Endothelial cell of umbilical vein (primary cell): ENCODE measurements at regions of chr19 and their contacts with region 1.

Region 1: GRCh38 chr19:33080761-33081681 is at the start of gene GPATCH1:
- DNase-seq: peak; percentile 87
- H3K4me3 ChIP-seq: peak within 1 kb of the TSS; percentile 79 to 89 (median 88)
- H3K27ac ChIP-seq: peak within 1 kb of the TSS; percentile 14
- H3K4me1 ChIP-seq: peaks cover 9% of the 10 kb centered on the region
- H3K27me3 ChIP-seq: no peaks in the 10 kb centered on the region
- CTCF ChIP-seq: no peak
- POLR2A ChIP-seq: peak; percentile 68
- total RNA-seq, gene GPATCH1: 8.1 and 9.2 TPM in 2 replicates

Region 2: DNA sequence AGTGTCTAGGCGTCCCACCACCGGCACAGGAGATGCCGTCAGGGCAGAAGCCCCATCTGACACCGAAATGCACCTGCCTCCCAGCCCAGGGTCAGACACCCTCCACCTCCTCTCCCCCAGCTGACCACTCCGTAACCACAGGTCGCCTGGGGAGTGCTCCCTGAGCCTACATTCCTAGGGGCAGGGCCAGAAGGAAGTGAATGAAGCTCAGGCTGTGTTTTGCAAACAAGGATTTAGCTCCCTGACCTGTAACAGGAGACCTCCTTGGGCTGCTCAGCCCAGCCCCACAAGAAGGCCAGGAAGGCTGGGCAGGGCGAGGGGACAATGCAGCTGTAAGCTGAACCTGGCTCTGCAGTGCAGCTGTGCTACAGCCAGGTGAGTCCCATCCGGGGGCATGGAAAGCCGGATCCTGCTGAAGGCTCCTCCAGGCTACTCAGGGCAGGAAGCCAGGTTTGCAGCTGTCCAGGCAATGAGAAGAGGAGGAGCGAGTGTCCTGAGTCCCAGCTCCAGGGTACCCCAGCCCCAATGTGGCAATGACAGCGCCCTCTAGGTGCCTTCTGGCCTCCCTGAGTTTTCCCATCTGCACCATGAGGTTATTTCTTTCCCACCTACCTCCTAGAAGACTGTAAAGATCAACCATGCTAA is 58.4 kb before region 1 on chr19:
- CTCF ChIA-PET with region 1: no interaction called
- POLR2A ChIA-PET with region 1: no interaction called
- dilution Hi-C with region 1: no loop called
- intact Hi-C with region 1: no loop called
- DNase-seq: no peak
- H3K4me3 ChIP-seq: no peak overlapping the region
- H3K27ac ChIP-seq: no peak overlapping the region
- H3K4me1 ChIP-seq: no peaks in the 10 kb centered on the region
- H3K27me3 ChIP-seq: no peaks in the 10 kb centered on the region
- CTCF ChIP-seq: no peak
- POLR2A ChIP-seq: no peak

Region 3: DNA sequence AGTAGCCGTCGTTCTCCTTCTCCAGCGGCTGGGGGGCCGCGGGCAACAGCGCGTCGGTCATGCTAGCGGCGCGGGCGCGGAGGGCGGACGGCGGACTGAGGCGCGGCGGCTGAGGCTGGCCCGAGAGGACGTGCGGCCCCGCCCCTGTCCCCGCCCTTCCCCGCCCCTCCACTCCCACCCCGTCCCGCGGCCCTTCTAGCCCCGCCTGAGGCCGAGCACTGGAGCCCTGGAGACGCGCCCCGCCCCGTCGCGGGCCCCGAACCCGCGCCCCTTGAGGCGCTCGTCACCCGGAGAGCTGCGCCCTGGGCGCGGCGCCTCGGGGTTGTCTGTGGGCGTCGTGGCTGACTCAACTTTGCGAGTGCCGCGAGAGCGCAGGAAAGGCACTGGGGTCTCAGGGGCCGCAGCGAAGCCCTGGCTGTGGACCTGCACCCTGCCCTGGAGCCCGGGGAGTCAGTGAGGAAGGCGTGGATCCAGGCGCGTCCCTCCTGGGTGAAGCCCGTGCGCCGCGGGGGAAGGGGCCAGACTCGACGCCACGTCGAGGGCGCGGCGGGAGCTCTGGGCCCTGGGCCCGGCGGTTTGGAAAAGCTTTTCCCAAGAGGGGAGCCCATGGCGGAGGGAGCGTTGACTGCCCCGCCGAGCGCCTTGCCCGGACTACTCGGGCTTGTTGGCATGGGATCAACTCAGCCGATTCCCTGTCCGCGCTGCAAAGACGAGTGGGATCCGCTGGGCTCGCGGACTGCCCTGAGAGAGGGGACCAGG is 16.1 kb before region 1 on chr19 and contains the start of gene RHPN2:
- CTCF ChIA-PET with region 1: interaction called, 3 read pairs
- POLR2A ChIA-PET with region 1: no interaction called
- dilution Hi-C with region 1: no loop called
- intact Hi-C with region 1: loop called (anchors 2 kb)
- DNase-seq: peak; percentile 57
- H3K4me3 ChIP-seq: peak within 1 kb of the TSS in 1 of 3 experiments; percentile 59
- H3K27ac ChIP-seq: no peak within 1 kb of the TSS
- H3K4me1 ChIP-seq: no peaks in the 10 kb centered on the region
- H3K27me3 ChIP-seq: peaks cover 5 to 16% of the 10 kb centered on the region in 2 experiments
- CTCF ChIP-seq: no peak
- POLR2A ChIP-seq: no peak
- total RNA-seq, gene RHPN2: 2.7 and 3.3 TPM in 2 replicates